ENCODE measurements at regions of chr1 and their contacts with region 1.

Region 1: DNA sequence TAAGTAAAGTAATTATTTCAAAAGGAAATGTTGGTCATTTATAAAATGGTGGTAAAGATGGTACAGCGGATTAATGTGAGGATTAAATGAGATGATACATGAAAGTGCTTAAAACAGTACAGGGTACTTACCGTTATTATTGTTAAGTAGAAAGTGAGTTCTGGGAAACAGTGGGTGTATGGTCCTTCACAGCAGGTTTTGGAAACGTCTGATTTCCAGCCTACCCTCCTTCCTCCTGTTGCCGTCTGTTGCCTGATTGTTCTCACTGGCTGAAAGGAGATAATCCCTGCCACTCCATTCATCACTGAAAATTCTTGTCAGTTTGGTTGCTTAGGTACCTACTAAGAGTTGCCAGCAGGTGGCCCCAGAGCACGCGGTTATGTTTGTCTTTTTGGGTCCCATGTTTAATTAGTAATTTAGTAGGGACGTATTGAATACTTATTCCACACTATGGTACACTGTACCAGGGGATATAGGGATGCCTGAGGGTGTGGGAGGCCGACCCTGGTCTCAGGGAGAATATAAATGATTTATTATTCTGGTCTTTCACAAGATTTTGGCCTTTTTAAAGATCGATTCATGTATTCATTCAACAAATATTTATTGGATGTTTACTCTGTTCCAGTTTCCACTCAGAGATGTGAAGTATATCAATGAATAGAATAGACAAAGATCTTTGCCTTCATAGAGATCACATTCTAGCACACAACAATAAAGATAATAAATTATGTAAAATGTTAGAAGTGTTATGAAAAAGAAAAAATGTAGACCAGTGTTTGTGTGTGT is 30.8 kb upstream of the RPTN start:
- DNase-seq: peak; percentile 80
- H3K4me3 Mint-ChIP-seq: peak overlapping the region; percentile 68
- H3K27ac Mint-ChIP-seq: no peak overlapping the region
- H3K4me1 Mint-ChIP-seq: peaks cover 8% of the 10 kb centered on the region
- H3K27me3 Mint-ChIP-seq: peaks cover 2% of the 10 kb centered on the region

Region 2: DNA sequence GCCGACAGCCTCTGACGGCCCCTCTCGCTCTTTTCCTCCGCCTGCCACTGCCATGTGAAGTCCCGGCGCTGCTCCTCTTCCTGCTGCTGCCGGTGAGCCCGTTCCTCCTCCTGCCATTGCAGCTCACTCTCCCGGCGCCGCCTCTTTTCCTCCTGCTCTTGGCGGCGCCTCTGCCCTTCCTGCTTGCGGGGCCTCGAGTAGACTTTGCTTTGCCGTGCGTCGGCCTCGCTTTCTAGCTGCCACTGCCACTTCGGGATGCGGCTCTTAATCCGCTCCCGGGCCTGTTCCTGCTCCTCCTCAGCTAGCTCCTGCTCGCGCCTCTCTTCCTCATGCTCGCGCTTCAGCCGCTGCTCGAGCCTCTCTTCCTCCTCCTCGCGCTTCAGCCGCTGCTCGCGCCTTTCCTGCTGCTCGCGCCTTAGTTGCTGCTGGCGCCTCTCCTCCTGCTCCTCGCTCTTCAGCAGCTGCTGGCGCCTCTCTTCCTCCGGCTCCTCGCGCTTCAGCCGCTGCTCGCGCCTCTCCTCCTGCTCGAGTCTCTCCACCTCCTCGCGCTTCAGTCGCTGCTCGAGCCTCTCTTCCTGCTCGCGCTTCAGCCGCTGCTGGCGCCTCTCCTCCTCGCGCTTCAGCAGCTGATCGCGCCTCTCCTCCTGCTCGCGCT is 78.9 kb before region 1 on chr1:
- CTCF ChIA-PET with region 1: interaction called, 30 read pairs
- POLR2A ChIA-PET with region 1: interaction called, 3 read pairs
- intact Hi-C with region 1: loop called (anchors 10 kb)
- DNase-seq: peak; percentile 54
- H3K4me3 Mint-ChIP-seq: no peak overlapping the region
- H3K27ac Mint-ChIP-seq: no peak overlapping the region
- H3K4me1 Mint-ChIP-seq: no peaks in the 10 kb centered on the region
- H3K27me3 Mint-ChIP-seq: peaks cover 15% of the 10 kb centered on the region

Region 3: GRCh38 chr1:152167835-152168519 is 21.9 kb before region 1 on chr1:
- CTCF ChIA-PET with region 1: interaction called, 11 read pairs
- POLR2A ChIA-PET with region 1: no interaction called
- intact Hi-C with region 1: no loop called
- DNase-seq: no peak
- H3K4me3 Mint-ChIP-seq: no peak overlapping the region
- H3K27ac Mint-ChIP-seq: no peak overlapping the region
- H3K4me1 Mint-ChIP-seq: peaks cover 7% of the 10 kb centered on the region
- H3K27me3 Mint-ChIP-seq: peaks cover 2% of the 10 kb centered on the region

Region 4: GRCh38 chr1:152347116-152347728 is 157.4 kb after region 1 on chr1:
- CTCF ChIA-PET with region 1: interaction called, 19 read pairs
- POLR2A ChIA-PET with region 1: no interaction called
- intact Hi-C with region 1: loop called (anchors 1 kb)
- DNase-seq: peak; percentile 46
- H3K4me3 Mint-ChIP-seq: no peak overlapping the region
- H3K27ac Mint-ChIP-seq: no peak overlapping the region
- H3K4me1 Mint-ChIP-seq: peaks cover 3% of the 10 kb centered on the region
- H3K27me3 Mint-ChIP-seq: peaks cover 3% of the 10 kb centered on the region

Region 5: GRCh38 chr1:152811050-152811449 is 621.2 kb after region 1 on chr1:
- CTCF ChIA-PET with region 1: no interaction called
- POLR2A ChIA-PET with region 1: no interaction called
- intact Hi-C with region 1: no loop called
- DNase-seq: no peak
- H3K4me3 Mint-ChIP-seq: no peak overlapping the region
- H3K27ac Mint-ChIP-seq: no peak overlapping the region
- H3K4me1 Mint-ChIP-seq: no peaks in the 10 kb centered on the region
- H3K27me3 Mint-ChIP-seq: peaks cover 7% of the 10 kb centered on the region